Mammary epithelial cell (primary cell): ENCODE measurements at regions of chr11 and their contacts with region 1.

Region 1: GRCh38 chr11:14300661-14301304 is 58.2 kb downstream of the RRAS2 start:
- DNase-seq: peak; percentile 62
- H3K4me3 ChIP-seq: no peak overlapping the region
- H3K27ac ChIP-seq: no peak overlapping the region
- H3K4me1 ChIP-seq: peaks cover 14% of the 10 kb centered on the region
- H3K27me3 ChIP-seq: no peaks in the 10 kb centered on the region
- CTCF ChIP-seq: peak; percentile 85 to 93

Region 2: DNA sequence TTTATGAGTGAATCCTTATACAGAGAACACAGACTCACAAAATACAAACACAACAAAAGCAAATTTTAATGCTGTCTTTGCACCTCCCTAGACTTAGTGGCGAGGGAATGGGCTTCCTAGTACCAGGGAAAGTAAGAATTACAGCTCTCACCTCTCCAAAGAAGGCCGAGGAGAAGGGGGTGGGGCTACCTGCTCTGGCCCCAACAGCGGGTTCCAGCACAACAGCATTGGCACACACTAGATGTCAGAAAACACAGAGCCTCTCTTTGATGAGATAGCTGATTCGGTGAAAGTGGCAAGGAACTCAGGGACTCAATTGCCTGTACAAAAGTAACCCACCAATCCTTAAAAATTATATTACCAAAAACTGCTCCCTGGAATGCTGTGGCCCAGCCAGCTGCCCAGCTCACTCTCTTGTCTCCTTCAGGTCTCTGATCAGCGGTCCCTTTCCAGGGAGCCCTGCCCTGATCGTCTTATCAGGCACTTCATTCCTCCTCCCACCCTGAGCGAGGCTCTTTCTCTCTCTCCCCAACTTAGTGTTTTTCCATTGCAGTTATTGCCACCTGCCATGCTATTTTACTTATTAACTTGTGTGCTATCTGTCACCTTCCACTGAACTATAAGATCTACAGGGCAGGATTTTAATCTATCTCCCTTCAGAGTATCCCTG is 307.6 kb before region 1 on chr11:
- CTCF ChIA-PET with region 1: no interaction called
- dilution Hi-C with region 1: no loop called
- in situ Hi-C with region 1: no loop called
- intact Hi-C with region 1: no loop called
- DNase-seq: no peak
- H3K4me3 ChIP-seq: no peak overlapping the region
- H3K27ac ChIP-seq: no peak overlapping the region
- H3K4me1 ChIP-seq: no peaks in the 10 kb centered on the region
- H3K27me3 ChIP-seq: peaks cover 3% of the 10 kb centered on the region
- CTCF ChIP-seq: no peak

Region 3: DNA sequence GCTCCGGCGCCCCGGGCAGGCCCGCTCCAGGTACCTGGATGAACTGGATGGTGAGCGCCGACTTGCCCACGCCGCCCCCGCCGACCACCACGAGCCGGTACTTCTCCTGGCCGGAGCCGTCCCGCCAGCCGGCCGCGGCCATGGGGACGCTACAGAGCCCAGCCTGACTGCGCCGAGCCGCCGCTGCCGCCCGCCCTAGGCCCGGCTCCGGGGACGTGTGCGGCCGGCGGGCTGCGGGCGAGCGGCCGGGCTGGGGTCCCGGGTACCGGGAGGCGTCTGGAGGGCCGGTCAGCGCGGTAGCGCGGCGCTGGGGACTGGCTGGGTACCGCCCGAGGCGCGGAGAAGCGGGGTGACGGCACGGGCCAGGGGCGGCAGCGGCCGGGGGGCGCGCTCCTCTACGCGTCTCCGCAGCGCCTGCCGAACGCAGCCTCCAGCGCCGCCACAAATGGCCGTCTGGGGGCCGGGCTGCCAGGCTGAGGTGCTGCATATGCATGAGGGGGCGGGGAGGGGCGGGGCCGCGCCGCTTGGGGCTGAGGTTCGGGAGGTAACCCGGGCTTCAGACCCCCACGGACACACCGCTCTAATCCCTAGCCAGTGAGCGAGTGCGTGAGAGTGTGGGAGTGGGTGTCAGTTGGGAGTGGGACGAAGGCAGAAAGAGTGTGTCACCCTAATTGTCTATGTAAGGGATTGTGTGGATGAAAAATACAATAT is 58.1 kb after region 1 on chr11 and contains the start of gene RRAS2:
- CTCF ChIA-PET with region 1: no interaction called
- dilution Hi-C with region 1: no loop called
- in situ Hi-C with region 1: no loop called
- intact Hi-C with region 1: loop called (anchors 2 kb)
- DNase-seq: peak; percentile 69
- H3K4me3 ChIP-seq: peak within 1 kb of the TSS; percentile 84 to 92 (median 88)
- H3K27ac ChIP-seq: peak within 1 kb of the TSS; percentile 88
- H3K4me1 ChIP-seq: peaks cover 5% of the 10 kb centered on the region
- H3K27me3 ChIP-seq: no peaks in the 10 kb centered on the region
- CTCF ChIP-seq: no peak
- total RNA-seq, gene RRAS2: 125 to 141 TPM

Region 4: DNA sequence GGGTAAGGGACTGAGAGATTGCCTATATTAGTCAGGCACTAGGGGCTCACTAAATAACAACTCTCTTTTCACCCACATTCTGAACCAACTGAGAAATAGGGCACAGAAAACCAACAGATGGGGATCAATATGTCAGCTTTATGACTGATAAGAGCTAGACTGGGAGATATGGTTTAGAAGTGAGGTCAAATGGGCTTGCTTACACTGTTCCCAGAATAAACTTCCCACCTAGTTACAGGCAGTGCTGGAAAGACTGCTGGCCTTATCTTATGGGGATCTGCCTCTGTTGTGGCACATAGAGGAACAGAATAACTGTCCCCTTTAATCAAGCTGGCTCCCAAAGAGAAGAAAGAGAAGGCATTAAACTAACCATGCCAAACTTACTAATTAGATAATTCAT is 68.8 kb after region 1 on chr11:
- CTCF ChIA-PET with region 1: no interaction called
- dilution Hi-C with region 1: loop called (anchors 5 kb)
- in situ Hi-C with region 1: no loop called
- intact Hi-C with region 1: no loop called
- DNase-seq: no peak
- H3K4me3 ChIP-seq: no peak overlapping the region
- H3K27ac ChIP-seq: no peak overlapping the region
- H3K4me1 ChIP-seq: peaks cover 10% of the 10 kb centered on the region
- H3K27me3 ChIP-seq: no peaks in the 10 kb centered on the region
- CTCF ChIP-seq: no peak

Region 5: DNA sequence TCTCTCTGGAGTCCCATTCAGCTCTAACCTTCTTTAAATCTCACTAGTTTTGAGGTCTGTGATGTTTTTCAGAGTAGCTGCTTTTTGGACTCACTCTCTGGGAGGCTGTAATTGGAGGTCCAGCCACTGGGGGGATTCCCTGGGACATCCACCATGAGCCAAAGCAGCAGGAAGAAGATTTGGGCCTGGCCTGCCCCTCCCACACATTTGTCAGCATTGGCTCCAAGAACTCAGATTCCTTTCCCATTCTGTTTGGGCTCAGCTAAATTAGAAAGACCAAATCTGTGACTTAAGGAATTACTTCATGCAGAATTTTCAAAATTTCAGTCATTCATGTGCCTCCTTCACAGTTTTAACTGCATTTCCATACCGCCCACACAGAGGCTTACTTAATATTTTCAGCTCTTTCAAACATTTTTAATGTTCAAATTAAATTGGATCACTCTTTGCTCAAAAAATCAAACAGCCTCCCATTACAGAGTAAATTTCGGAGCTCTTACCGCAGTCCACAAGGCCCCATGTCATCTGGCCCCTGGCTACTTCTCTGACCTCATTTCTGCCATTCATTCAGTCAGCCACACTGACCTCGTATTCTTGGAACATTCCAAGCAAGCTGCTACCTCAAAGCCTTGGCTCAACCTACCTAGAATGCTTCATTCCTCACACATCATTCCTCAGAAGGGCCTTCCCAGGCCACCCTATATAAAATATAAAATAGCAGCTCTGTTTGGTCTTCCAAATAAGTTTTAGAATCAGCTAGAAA is 112.7 kb after region 1 on chr11:
- CTCF ChIA-PET with region 1: interaction called, 4 read pairs
- dilution Hi-C with region 1: no loop called
- in situ Hi-C with region 1: loop called in 1 of 2 experiments (anchors 10 kb)
- intact Hi-C with region 1: no loop called
- DNase-seq: peak; percentile 48
- H3K4me3 ChIP-seq: no peak overlapping the region
- H3K27ac ChIP-seq: peak overlapping the region; percentile 20
- H3K4me1 ChIP-seq: peaks cover 67% of the 10 kb centered on the region
- H3K27me3 ChIP-seq: no peaks in the 10 kb centered on the region
- CTCF ChIP-seq: peak; percentile 10 to 21

Region 6: GRCh38 chr11:14443638-14444037 is 142.9 kb after region 1 on chr11:
- CTCF ChIA-PET with region 1: no interaction called
- dilution Hi-C with region 1: no loop called
- in situ Hi-C with region 1: loop called (anchors 10 kb)
- intact Hi-C with region 1: no loop called
- DNase-seq: peak; percentile 64
- H3K4me3 ChIP-seq: no peak overlapping the region
- H3K27ac ChIP-seq: no peak overlapping the region
- H3K4me1 ChIP-seq: peaks cover 36% of the 10 kb centered on the region
- H3K27me3 ChIP-seq: no peaks in the 10 kb centered on the region
- CTCF ChIP-seq: no peak

Region 7: DNA sequence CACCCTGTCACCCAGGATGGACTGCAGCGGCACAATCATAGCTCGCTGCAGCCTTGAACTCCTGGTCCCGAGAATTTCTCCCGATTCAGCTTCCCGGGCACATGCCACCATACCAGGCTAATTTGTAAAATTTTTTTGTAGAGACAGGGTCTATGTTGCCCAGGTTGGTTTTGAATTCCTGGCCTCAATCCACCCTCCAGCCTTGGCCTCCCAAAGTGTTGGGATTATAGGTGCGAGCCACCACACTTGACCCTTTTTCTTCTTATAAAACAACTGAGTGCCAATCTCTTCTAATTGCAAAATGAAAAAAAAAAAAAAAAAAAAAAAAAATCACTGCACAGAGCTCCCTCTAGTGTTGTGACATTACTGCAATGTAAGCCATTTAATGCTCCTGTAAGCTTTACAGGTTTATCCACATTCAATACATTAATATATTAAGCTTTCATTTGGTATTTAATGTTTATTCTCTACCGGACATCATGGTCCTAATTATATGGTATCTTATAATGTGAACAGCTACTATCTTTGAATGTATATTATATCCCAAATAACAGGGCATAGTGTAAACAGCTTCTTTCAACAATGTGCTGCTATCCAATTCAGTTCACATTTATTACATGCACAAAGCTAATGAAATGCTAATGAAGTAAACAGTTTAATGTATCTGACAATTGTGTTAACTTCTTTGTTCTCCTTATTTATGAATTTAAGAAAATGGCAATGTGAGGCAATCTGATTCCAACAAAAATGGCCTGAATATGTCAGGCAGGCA is 154.3 kb after region 1 on chr11:
- CTCF ChIA-PET with region 1: interaction called, 13 read pairs
- dilution Hi-C with region 1: loop called (anchors 25 kb)
- in situ Hi-C with region 1: no loop called
- intact Hi-C with region 1: loop called (anchors 1 kb)
- DNase-seq: no peak
- H3K4me3 ChIP-seq: no peak overlapping the region
- H3K27ac ChIP-seq: no peak overlapping the region
- H3K4me1 ChIP-seq: no peaks in the 10 kb centered on the region
- H3K27me3 ChIP-seq: no peaks in the 10 kb centered on the region
- CTCF ChIP-seq: peak; percentile 68 to 70